ENCODE measurements at regions of chr2 and their contacts with region 1.

Region 1: GRCh38 chr2:197286805-197287598 is 23.6 kb downstream of the ANKRD44 start:
- DNase-seq: peak; percentile 49
- H3K4me3 Mint-ChIP-seq: peak overlapping the region; percentile 76
- H3K27ac Mint-ChIP-seq: peak overlapping the region; percentile 100
- H3K4me1 Mint-ChIP-seq: peaks cover 78% of the 10 kb centered on the region
- H3K27me3 Mint-ChIP-seq: no peaks in the 10 kb centered on the region

Region 2: DNA sequence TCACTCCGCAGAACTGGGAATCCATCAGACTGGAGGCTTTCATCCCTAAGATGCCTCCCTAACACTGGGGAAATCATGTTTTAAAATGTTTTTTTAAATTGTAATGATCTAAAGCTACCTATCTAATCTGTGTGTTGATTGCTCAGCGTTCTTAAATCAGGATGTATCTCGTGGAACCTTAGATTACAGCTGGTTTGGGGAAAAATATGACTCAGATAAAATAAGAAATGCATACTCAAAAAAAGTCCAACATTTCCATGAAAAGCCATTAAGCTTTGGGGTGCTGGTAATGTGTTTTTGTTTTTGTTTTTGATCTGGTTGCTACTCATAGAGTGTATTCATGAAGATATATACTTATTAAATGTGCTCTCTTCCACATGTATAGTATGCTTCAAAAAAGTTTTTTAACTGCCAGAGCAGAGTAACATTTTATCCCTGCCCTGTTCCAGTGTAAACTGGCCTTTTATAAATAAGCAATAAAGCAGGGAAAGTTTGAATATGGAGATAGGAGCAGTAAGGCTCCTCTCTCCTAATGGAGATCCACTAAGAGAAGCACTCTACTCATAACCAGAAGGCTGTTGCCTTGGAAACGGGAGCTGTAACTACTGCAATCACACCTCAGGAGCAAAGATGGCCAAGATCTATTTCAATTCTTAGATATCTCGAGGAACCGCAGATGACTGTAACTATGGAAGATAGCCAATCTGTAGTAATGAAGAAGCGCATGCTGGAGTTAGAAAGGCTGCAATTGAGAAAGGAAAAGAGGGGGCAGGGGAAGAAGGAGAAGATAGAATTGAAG is 18.0 kb before region 1 on chr2:
- intact Hi-C with region 1: loop called (anchors 1 kb)
- DNase-seq: no peak
- H3K4me3 Mint-ChIP-seq: peak overlapping the region; percentile 6
- H3K27ac Mint-ChIP-seq: peak overlapping the region; percentile 90
- H3K4me1 Mint-ChIP-seq: peaks cover 90% of the 10 kb centered on the region
- H3K27me3 Mint-ChIP-seq: no peaks in the 10 kb centered on the region

Region 3: GRCh38 chr2:197304556-197305011 is 17.6 kb after region 1 on chr2:
- intact Hi-C with region 1: loop called (anchors 1 kb)
- DNase-seq: no peak
- H3K4me3 Mint-ChIP-seq: peak overlapping the region; percentile 84
- H3K27ac Mint-ChIP-seq: peak overlapping the region; percentile 95
- H3K4me1 Mint-ChIP-seq: peaks cover 87% of the 10 kb centered on the region
- H3K27me3 Mint-ChIP-seq: no peaks in the 10 kb centered on the region

Region 4: DNA sequence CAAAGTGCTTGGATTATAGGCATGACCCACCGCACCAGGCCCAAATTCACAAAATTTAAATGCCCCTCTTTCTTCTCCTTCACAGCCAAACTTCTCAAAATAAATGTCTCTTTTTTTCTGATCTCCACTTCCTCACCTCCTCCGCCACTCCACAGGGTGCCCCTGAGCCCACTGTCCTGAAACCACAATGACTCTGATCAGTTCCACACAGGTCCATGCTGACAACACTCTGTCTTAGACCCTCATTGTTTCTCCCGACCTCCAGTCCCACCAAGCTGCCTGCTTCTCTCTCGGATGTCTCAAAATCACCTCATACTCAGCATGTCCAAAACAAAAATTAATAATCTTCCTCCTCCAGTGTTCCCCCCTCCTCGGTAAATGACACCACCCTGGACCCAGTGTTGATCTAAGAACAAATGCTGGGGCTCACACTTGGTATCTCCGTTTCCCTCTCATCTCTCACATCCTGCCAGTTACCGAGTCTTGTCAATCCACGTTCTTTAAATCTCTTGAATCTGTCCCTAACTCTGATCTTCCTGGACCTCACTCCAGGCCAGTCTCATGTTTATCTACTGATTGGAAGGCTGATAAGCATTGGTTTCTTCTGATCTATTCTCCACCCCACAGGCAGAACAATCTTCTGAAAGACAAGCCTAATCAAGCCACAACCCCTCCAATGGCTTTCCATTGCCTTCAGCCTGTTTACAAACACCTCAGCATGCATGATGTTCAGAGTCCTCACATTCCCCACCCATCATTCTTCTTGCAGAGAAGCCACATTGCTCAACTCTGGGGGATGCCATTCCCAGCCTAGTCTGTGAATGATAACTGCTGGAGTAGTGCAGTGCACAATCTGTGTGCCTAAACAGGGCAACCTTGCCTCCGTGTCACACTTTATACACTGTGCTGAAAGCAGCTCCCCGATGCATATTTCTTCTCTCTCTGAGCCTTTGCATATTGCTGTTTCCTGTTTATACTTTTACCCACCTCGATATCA is 36.0 kb after region 1 on chr2:
- intact Hi-C with region 1: loop called (anchors 2 kb)
- DNase-seq: no peak
- H3K4me3 Mint-ChIP-seq: peak overlapping the region; percentile 71
- H3K27ac Mint-ChIP-seq: peak overlapping the region; percentile 87
- H3K4me1 Mint-ChIP-seq: peaks cover 50% of the 10 kb centered on the region
- H3K27me3 Mint-ChIP-seq: no peaks in the 10 kb centered on the region

Region 5: DNA sequence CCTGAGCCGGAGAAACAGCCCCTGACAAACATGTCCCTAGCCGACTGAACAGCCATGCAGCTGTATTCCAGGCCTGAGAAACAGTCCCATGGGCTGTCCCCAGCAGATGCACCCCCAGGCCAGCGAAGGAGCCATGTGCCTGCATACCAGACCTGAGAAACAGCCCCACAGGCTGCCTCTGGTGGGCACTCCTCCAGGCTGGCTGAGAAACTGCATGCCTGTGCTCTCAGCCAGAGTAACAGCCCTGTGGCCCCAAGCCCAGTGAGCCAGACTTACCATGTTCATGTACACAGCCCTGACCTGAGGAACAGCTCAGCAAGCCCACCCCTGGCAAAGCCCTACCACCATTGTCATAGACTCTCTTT is 473.3 kb after region 1 on chr2:
- intact Hi-C with region 1: no loop called
- DNase-seq: no peak
- H3K4me3 Mint-ChIP-seq: no peak overlapping the region
- H3K27ac Mint-ChIP-seq: no peak overlapping the region
- H3K4me1 Mint-ChIP-seq: no peaks in the 10 kb centered on the region
- H3K27me3 Mint-ChIP-seq: peaks cover 11% of the 10 kb centered on the region